ENCODE measurements at regions of chr19 and their contacts with region 1.

Region 1: GRCh38 chr19:48152551-48152950 is 17.6 kb downstream of the LIG1 start:
- DNase-seq: peak; percentile 41
- H3K27ac ChIP-seq: no peak overlapping the region
- CTCF ChIP-seq: peak; percentile 82

Region 2: GRCh38 chr19:48108997-48109782 is 43.4 kb before region 1 on chr19:
- CTCF ChIA-PET with region 1: interaction called, 29 read pairs
- POLR2A ChIA-PET with region 1: no interaction called
- DNase-seq: no peak
- H3K27ac ChIP-seq: no peak overlapping the region
- CTCF ChIP-seq: no peak

Region 3: DNA sequence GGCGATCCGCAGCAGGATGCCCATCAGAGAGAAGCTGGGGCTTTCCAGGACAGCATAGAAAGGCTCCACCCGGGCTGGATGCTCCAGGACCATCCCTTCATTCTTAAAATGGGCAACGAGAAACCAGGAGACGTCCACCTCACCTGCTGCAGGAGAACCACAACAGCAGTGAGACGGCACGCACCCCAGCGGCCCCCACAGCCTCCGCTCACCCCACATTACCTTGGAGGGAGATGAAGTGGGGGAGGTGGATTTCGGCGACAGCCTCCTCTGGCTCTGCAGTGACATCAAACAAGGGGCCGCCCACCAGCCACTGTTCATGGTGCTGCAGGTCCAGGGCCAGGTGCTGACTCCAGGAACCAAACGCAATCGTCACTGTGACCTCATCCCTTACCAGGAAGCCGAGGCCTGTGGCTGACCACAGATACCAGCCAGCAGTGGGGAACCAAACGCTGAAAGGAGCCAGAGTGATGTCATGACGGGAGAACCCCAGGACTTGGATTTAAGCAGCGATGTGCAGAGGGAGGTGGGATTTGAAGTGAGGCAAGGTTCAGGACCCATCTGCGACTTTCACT is 78.1 kb after region 1 on chr19:
- CTCF ChIA-PET with region 1: no interaction called
- POLR2A ChIA-PET with region 1: no interaction called
- DNase-seq: no peak
- H3K27ac ChIP-seq: no peak overlapping the region
- CTCF ChIP-seq: no peak

Region 4: GRCh38 chr19:48271531-48272151 is 119.1 kb after region 1 on chr19:
- CTCF ChIA-PET with region 1: no interaction called
- POLR2A ChIA-PET with region 1: no interaction called
- DNase-seq: peak; percentile 23
- H3K27ac ChIP-seq: peak overlapping the region; percentile 69
- CTCF ChIP-seq: no peak